Activated naive CD4-positive, alpha-beta T cell treated with anti-CD3 and anti-CD28 coated beads for 36 hours (primary cell): ENCODE measurements at regions of chr7 and their contacts with region 1.

Region 1: GRCh38 chr7:8035647-8036518 is 67.3 kb downstream of the GLCCI1 start:
- DNase-seq: no peak
- H3K4me3 Mint-ChIP-seq: no peak overlapping the region
- H3K27ac Mint-ChIP-seq: no peak overlapping the region
- H3K4me1 Mint-ChIP-seq: peaks cover 20% of the 10 kb centered on the region
- H3K27me3 Mint-ChIP-seq: no peaks in the 10 kb centered on the region

Region 2: DNA sequence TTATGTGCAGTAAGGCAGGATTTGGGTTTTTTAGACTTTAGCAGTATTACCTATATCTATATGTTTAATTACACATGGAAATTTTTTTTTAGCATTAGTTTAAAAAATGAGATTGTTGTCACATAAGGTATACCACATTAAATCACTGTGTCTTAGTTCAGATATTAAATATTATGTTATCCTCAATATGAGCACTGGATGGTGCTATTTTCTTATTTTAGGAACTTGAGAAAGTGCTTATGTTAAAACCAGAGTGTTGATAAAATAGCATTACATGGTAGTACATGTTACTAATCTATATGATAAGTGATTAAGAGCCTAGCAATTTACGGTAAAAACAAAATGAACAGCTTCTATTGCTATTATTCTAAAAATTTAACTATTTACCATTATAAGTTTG is 440.4 kb before region 1 on chr7:
- CTCF ChIA-PET with region 1: interaction called, 3 read pairs
- intact Hi-C with region 1: loop called (anchors 5 kb)
- DNase-seq: no peak
- H3K4me3 Mint-ChIP-seq: no peak overlapping the region
- H3K27ac Mint-ChIP-seq: no peak overlapping the region
- H3K4me1 Mint-ChIP-seq: peaks cover 3% of the 10 kb centered on the region
- H3K27me3 Mint-ChIP-seq: no peaks in the 10 kb centered on the region

Region 3: GRCh38 chr7:7719236-7719635 is 316.6 kb before region 1 on chr7:
- CTCF ChIA-PET with region 1: no interaction called
- intact Hi-C with region 1: no loop called
- DNase-seq: peak; percentile 77
- H3K4me3 Mint-ChIP-seq: no peak overlapping the region
- H3K27ac Mint-ChIP-seq: peak overlapping the region; percentile 63
- H3K4me1 Mint-ChIP-seq: peaks cover 19% of the 10 kb centered on the region
- H3K27me3 Mint-ChIP-seq: no peaks in the 10 kb centered on the region

Region 4: DNA sequence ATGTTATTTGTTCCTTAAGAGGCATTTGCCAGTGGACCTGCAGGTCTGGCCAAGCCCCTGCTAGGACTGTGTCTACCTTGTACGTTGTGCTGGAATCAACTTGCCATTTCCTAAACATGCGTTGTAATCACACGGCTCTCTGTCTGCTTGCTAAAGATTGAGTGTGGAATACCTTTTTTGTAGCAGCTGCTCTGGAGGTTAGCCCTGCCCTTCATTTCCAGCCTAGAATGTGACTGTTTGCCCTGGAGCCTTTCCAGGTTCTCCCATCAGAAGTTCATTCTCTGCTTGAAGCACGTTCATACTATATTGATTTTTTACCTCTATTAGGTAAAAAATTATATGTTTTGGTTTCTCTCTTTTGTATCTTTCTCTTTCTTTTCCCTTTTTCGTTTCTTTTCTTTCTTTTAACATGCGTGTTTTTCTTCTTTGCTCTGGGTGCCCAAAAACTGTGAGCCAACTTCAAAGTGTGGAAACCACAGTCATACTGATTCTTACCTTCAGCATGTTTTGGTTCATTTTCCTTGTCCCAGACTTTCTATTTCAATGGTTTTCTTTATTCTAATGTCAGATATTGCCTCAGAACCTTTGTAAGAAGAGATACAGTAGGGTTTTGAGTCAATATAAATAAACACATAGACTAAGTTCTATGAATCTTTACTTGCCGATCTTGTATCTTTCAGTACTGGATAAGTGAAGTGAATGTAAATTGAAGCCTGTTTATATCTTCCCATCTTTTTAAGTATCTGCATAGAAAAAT is 205.6 kb before region 1 on chr7:
- CTCF ChIA-PET with region 1: no interaction called
- intact Hi-C with region 1: loop called (anchors 10 kb)
- DNase-seq: peak; percentile 15
- H3K4me3 Mint-ChIP-seq: no peak overlapping the region
- H3K27ac Mint-ChIP-seq: no peak overlapping the region
- H3K4me1 Mint-ChIP-seq: peaks cover 18% of the 10 kb centered on the region
- H3K27me3 Mint-ChIP-seq: no peaks in the 10 kb centered on the region

Region 5: GRCh38 chr7:8190119-8190895 is 154.4 kb after region 1 on chr7:
- CTCF ChIA-PET with region 1: interaction called, 15 read pairs
- intact Hi-C with region 1: loop called (anchors 1 kb)
- DNase-seq: peak; percentile 84
- H3K4me3 Mint-ChIP-seq: no peak overlapping the region
- H3K27ac Mint-ChIP-seq: no peak overlapping the region
- H3K4me1 Mint-ChIP-seq: peaks cover 10% of the 10 kb centered on the region
- H3K27me3 Mint-ChIP-seq: no peaks in the 10 kb centered on the region

Region 6: DNA sequence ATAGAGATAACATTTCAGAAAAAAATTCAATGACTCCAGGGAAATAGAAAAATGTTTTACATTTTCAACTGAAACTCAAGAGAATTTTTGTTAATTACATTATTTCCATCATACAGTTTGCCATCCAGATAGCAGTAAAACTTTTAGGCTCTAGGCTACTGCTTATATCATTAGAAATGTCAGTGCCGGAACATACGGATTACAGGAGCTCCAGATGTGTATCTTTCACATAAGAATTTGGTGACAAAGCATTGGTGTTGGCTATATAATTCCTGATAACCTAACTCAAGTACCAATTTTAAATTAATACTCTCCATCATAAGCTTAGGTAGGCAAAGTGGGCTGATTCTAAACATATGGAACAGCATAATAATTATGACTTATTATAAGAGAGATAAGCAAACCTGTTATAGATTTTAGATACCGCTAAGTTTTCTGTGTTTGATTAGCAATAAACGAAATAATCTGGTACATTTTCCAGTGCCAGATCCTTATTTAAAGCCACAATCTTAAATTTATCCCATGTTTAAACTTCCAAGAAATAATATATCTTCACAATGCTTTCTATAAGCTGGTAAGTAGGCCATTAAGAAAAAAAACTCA is 1035.4 kb after region 1 on chr7:
- CTCF ChIA-PET with region 1: no interaction called
- intact Hi-C with region 1: no loop called
- DNase-seq: no peak
- H3K4me3 Mint-ChIP-seq: no peak overlapping the region
- H3K27ac Mint-ChIP-seq: no peak overlapping the region
- H3K4me1 Mint-ChIP-seq: no peaks in the 10 kb centered on the region
- H3K27me3 Mint-ChIP-seq: no peaks in the 10 kb centered on the region